PC-3 (cell line): ENCODE measurements at regions of chr17 and their contacts with region 1.

Region 1: GRCh38 chr17:72270273-72270950 is 149.6 kb downstream of the SOX9 start:
- DNase-seq: peak; percentile 98
- ATAC-seq: peak; percentile 96
- H3K4me3 ChIP-seq: peak overlapping the region; percentile 14; the same call in 1 of the 2 replicates
- H3K27ac ChIP-seq: peak overlapping the region; percentile 91
- H3K4me1 ChIP-seq: peaks cover 33% of the 10 kb centered on the region
- H3K27me3 ChIP-seq: no peaks in the 10 kb centered on the region
- CTCF ChIP-seq: no peak

Region 2: GRCh38 chr17:72287586-72287985 is 17.2 kb after region 1 on chr17:
- CTCF ChIA-PET with region 1: no interaction called
- POLR2A ChIA-PET with region 1: no interaction called
- intact Hi-C with region 1: no loop called
- DNase-seq: no peak
- ATAC-seq: peak; percentile 53; the same call in 1 of the 2 replicates
- H3K4me3 ChIP-seq: no peak overlapping the region
- H3K27ac ChIP-seq: no peak overlapping the region
- H3K4me1 ChIP-seq: 0 out of 2 replicates have a peak, but pooled peaks cover 11% of the 10 kb centered on the region
- H3K27me3 ChIP-seq: no peaks in the 10 kb centered on the region
- CTCF ChIP-seq: no peak; the same call in 1 of the 2 replicates

Region 3: DNA sequence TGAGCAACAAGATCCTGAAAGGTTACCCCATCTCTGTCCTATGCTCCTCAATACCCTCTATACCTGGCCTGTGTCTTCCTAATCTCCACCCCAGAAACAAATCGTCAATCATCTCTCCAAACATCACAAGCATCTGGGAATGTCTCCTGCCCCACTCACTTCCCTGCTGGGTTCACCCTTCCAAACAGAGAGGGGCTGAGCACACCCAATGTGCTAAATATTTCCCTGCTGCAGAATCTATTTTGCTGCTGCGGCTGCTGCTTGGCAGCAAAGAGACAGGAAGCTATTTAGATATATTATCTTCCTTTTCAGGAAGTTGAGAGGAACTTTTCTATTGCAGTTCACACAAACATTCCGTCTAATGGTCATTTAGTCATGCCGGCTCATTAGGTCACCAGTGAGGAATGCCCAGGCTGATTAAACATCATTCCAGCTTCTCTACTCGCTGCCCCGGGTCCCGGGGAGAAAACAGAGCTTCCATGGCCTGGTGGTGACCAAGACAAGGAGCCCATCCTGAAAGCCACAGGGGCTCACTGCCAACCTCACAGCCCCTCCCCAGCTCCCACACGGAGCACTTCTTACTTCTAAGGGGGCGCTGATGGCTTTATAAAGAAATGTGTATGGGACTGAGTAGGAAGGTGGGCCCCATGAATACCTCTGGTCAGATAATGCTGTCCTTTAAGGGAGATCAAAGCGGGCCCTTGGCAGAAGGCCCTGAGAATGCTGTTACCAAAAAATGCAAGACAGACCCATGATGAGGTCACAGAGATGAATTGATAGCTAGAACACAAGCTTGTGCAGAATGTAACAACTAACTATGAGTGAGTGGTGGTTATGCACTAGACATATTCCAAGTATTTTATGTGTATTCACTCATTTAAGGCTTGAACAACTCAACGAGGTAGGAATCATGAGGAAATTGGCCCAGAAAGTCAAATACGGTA is 68.7 kb after region 1 on chr17:
- CTCF ChIA-PET with region 1: no interaction called
- POLR2A ChIA-PET with region 1: no interaction called
- intact Hi-C with region 1: loop called (anchors 1 kb)
- DNase-seq: peak; percentile 97
- ATAC-seq: peak; percentile 93
- H3K4me3 ChIP-seq: peak overlapping the region; percentile 22; the same call in 1 of the 2 replicates
- H3K27ac ChIP-seq: peak overlapping the region; percentile 84
- H3K4me1 ChIP-seq: peaks cover 26% of the 10 kb centered on the region
- H3K27me3 ChIP-seq: no peaks in the 10 kb centered on the region
- CTCF ChIP-seq: no peak

Region 4: DNA sequence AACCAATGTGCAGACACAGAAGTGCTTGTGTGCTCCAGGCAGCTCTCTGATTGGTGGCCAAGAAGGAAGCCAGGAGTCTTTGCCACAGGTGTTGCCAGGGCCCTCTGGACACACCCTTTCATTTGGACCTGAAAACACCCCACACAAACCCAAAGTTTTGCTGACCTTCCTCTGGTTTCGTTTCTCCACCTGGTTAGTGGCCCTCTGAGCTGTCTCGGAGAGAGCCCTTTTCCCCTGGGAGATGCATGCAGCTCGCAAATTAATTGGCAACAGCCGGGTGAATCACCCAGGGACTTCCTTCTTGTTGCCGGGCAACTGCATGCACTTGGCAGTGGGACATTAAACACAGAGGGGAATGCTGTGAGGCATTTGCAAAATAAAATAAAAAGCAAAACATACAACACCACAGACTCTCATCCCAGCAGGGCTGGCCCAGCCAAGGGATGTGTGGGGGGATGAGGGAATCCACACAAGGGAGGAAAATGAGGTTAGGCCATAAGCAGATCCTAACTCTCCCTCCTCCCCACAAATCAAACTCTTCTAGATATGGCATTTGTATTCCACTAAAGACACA is 137.0 kb after region 1 on chr17:
- CTCF ChIA-PET with region 1: no interaction called
- POLR2A ChIA-PET with region 1: no interaction called
- intact Hi-C with region 1: loop called (anchors 2 kb)
- DNase-seq: peak; percentile 100
- ATAC-seq: peak; percentile 85
- H3K4me3 ChIP-seq: peak overlapping the region; percentile 12
- H3K27ac ChIP-seq: peak overlapping the region; percentile 96
- H3K4me1 ChIP-seq: peaks cover 56% of the 10 kb centered on the region
- H3K27me3 ChIP-seq: no peaks in the 10 kb centered on the region
- CTCF ChIP-seq: no peak